AG04449 (cell line): ENCODE measurements at regions of chr11 and their contacts with region 1.

Region 1: GRCh38 chr11:60899046-60899936 is 7.1 kb downstream of the PRPF19 start:
- DNase-seq: no peak
- H3K4me3 ChIP-seq: no peak overlapping the region
- CTCF ChIP-seq: peak; percentile 84

Region 2: DNA sequence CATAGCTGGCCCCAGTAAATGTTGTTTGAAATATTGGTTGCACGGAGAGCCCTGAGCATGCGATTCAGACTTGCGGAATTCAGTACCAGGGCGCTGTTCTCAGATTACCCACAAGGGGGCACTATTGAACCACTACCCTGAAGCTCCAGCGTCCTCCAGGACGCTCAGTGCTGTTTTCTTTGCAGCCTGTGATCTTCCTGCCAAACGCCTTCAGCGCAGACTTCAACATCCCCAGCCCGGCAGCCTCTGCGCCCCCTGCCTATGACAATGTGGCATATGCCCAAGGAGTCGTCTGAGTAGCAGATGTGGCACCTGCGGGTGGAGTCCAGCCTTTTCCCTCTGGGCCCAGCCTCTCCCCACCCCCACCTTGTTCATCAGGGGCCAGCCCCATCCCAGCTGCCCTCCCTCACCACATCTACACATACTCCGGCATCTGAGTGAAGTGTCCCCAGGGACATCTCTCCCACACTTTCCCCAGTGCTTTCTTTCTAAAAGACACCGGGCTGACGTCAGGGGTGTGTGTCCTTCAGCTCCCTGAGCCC is 123.8 kb before region 1 on chr11:
- CTCF ChIA-PET with region 1: interaction called, 105 read pairs
- POLR2A ChIA-PET with region 1: no interaction called
- DNase-seq: peak; percentile 60
- H3K4me3 ChIP-seq: no peak overlapping the region
- CTCF ChIP-seq: peak; percentile 75

Region 3: GRCh38 chr11:60860943-60861342 is 38.3 kb before region 1 on chr11:
- CTCF ChIA-PET with region 1: interaction called, 10 read pairs
- POLR2A ChIA-PET with region 1: no interaction called
- DNase-seq: no peak
- H3K4me3 ChIP-seq: no peak overlapping the region
- CTCF ChIP-seq: no peak

Region 4: DNA sequence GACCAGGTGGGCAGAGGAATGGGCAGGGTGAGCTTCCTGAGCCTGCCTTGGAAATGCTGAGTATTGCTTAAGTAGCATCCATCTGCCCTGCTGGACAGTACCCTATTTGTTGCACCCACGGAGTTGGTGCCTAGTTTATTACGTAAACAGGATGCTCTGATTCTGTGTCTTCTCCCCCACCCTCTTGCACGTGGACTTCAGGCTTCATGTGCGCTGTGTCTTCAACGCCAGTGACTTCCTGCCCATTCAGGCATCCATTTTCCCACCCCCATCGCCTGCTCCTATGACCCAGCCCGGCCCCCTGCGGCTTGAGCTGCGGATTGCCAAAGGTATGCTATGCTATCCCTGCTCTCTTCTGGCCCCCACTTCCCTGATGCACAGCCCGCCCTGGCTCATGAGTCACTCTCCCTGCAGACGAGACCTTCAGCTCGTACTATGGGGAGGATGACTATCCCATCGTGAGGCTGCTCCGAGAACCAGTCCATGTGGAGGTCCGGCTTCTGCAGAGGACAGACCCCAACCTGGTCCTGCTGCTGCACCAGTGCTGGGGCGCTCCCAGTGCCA is 26.2 kb before region 1 on chr11:
- CTCF ChIA-PET with region 1: interaction called, 20 read pairs
- POLR2A ChIA-PET with region 1: no interaction called
- DNase-seq: peak; percentile 40
- H3K4me3 ChIP-seq: no peak overlapping the region
- CTCF ChIP-seq: no peak

Region 5: GRCh38 chr11:60913793-60914632 is 14.7 kb after region 1 on chr11 and contains the start of gene TMEM109:
- CTCF ChIA-PET with region 1: interaction called, 40 read pairs
- POLR2A ChIA-PET with region 1: no interaction called
- DNase-seq: peak; percentile 51
- H3K4me3 ChIP-seq: peak within 1 kb of the TSS; percentile 86
- CTCF ChIP-seq: no peak

Region 6: DNA sequence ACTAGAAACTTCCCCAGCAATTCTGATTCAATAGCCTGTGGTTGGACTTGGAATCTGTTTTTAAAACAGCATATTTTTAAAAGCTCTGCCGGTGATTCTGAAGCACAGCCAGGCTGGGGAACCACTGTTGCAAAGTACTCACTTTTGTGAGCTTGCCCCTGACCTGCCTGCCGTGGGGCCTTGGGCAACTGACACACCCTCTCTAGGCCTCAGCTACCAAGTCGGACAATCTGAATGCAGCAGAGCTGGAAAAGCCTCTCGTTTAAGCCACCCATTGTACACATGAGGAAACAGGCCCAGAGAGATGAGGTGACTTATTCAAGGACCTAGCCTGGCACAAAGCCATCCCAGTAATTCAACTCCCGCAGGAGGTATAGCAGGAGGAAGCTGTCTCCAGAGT is 43.8 kb after region 1 on chr11:
- CTCF ChIA-PET with region 1: no interaction called
- POLR2A ChIA-PET with region 1: no interaction called
- DNase-seq: no peak
- H3K4me3 ChIP-seq: no peak overlapping the region
- CTCF ChIP-seq: no peak

Region 7: DNA sequence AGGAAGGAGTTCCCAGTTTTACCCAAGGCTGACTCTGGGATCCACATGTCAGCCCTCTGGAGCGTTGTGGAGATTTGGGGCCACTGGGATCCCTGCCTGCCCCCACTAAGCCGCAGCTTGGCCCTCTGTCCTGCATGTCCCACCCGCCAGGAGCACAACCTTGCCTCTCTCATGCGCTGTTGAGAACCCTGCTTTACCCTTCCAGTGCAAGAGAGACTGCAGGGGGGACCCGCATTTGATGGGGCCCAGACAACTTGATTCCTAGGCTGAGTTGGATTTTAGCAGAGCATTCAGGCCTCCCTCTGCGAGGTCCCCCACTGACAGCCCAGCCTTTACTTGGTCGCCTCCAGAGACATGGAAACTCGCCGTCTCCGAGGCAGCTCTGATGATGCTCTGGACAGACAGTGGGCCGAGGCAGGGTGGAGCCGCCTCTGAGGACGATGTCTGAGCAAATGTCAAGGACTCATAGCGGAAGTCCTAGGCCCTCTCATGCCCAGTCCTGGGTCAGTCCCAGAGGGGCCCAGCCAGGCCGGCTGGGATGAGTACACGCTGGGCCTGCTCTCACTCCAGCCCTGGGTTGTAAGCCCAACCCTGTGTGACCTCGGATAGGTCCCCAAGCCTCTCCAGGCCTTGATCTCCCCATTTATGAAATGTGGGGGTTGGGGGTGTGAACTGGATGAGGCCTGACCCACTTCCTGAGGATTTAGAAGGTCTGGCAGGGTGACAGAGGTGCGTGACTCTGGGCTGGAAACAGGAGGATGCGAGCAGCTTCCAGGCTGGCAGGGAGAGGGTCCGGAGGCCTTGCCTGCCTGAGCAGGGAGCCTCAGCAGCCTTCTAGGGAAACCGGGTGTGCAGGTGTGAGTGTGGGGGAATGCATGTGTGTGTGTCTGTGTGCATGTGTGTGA is 203.6 kb after region 1 on chr11:
- CTCF ChIA-PET with region 1: no interaction called
- POLR2A ChIA-PET with region 1: no interaction called
- DNase-seq: no peak
- H3K4me3 ChIP-seq: no peak overlapping the region
- CTCF ChIP-seq: no peak